Naive thymus-derived CD4-positive, alpha-beta T cell (primary cell): ENCODE measurements at regions of chr19 and their contacts with region 1.

Region 1: DNA sequence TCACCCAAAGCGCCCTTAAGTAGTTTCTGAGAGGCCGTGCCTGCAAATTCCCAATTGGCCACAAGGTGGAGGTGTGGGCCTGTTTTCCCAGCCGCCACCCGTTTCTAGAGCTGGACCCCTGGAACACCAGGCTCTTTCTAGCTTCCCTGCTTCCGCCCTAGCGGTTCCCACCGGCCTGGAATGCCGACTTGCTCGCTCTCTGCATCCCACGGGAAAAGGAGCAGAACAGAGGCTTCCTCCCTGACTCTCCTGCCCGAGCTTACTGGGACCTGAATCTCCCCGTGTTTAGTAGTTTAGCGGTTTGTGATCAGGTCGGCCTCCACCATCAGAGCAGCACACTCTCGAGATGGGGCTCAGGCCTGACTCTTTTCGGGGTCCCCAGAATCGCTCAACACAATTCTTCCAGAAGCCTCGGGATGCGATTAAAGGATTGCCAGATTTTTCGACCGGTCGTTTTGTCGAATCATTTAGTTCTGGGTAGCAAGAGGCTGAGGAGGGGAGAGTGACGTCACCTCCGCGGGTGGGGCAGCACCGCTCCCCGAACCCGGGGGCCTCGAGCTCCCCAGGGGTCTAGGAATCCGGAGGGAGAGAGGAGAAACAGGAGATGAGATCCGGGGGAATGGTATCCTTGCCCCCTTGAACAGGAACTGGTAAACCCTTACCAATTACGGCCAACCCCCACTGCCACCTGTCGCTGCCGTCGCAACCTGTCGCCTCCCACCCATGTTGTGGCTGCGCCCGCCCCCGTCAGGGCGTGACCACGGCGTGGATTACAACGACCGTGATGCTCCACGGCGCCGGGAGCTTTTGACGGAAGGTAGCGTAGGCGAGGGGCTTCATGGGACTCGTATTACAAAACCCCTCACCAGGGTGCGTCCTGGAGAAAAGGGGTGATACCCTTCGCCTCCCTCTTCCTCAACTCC is 8.0 kb downstream of the NAPSA start:
- DNase-seq: peak; percentile 71 to 91 (median 85)
- ATAC-seq: peak; percentile 89
- H3K4me3 ChIP-seq: peak overlapping the region; percentile 78
- H3K4me3 Mint-ChIP-seq: peak overlapping the region; percentile 88 to 95 (median 92)
- H3K27ac ChIP-seq: peak overlapping the region; percentile 90
- H3K27ac Mint-ChIP-seq: peak overlapping the region; percentile 83 to 99 (median 96)
- H3K4me1 ChIP-seq: peaks cover 0 to 16% of the 10 kb centered on the region in 2 donors
- H3K4me1 Mint-ChIP-seq: peaks cover 15 to 48% (median 42%) of the 10 kb centered on the region in 7 donors
- H3K27me3 ChIP-seq: no peaks in the 10 kb centered on the region
- H3K27me3 Mint-ChIP-seq: no peaks in the 10 kb centered on the region

Region 2: GRCh38 chr19:50368649-50369570 is 11.5 kb after region 1 on chr19:
- CTCF ChIA-PET with region 1: interaction called, 11 read pairs
- POLR2A ChIA-PET with region 1: interaction called, 12 read pairs
- intact Hi-C with region 1: loop called (anchors 1 kb)
- DNase-seq: peak; percentile 56 to 83 (median 74)
- ATAC-seq: peak; percentile 91
- H3K4me3 ChIP-seq: peak overlapping the region; percentile 69
- H3K4me3 Mint-ChIP-seq: peak overlapping the region; percentile 68 to 97 (median 93)
- H3K27ac ChIP-seq: peak overlapping the region; percentile 78
- H3K27ac Mint-ChIP-seq: peak overlapping the region; percentile 60 to 97 (median 91)
- H3K4me1 ChIP-seq: peaks cover under 1 to 4% of the 10 kb centered on the region in 2 donors
- H3K4me1 Mint-ChIP-seq: peaks cover 8 to 45% (median 36%) of the 10 kb centered on the region in 7 donors
- H3K27me3 ChIP-seq: no peaks in the 10 kb centered on the region
- H3K27me3 Mint-ChIP-seq: no peaks in the 10 kb centered on the region

Region 3: GRCh38 chr19:50383852-50384684 is 26.6 kb after region 1 on chr19 and contains the start of gene POLD1:
- CTCF ChIA-PET with region 1: no interaction called
- POLR2A ChIA-PET with region 1: interaction called, 11 read pairs
- intact Hi-C with region 1: loop called (anchors 1 kb)
- DNase-seq: peak; percentile 98 to 100 (median 99)
- ATAC-seq: peak; percentile 96
- H3K4me3 ChIP-seq: peak within 1 kb of the TSS; percentile 74
- H3K4me3 Mint-ChIP-seq: peak within 1 kb of the TSS; percentile 91 to 99 (median 94)
- H3K27ac ChIP-seq: peak within 1 kb of the TSS; percentile 75
- H3K27ac Mint-ChIP-seq: peak within 1 kb of the TSS; percentile 80 to 97 (median 94)
- H3K4me1 ChIP-seq: peaks cover 3 to 7% of the 10 kb centered on the region in 2 donors
- H3K4me1 Mint-ChIP-seq: peaks cover 16 to 51% (median 35%) of the 10 kb centered on the region in 7 donors
- H3K27me3 ChIP-seq: no peaks in the 10 kb centered on the region
- H3K27me3 Mint-ChIP-seq: no peaks in the 10 kb centered on the region
- total RNA-seq, gene POLD1: 26.0 to 110 (median 40.8) TPM

Region 4: DNA sequence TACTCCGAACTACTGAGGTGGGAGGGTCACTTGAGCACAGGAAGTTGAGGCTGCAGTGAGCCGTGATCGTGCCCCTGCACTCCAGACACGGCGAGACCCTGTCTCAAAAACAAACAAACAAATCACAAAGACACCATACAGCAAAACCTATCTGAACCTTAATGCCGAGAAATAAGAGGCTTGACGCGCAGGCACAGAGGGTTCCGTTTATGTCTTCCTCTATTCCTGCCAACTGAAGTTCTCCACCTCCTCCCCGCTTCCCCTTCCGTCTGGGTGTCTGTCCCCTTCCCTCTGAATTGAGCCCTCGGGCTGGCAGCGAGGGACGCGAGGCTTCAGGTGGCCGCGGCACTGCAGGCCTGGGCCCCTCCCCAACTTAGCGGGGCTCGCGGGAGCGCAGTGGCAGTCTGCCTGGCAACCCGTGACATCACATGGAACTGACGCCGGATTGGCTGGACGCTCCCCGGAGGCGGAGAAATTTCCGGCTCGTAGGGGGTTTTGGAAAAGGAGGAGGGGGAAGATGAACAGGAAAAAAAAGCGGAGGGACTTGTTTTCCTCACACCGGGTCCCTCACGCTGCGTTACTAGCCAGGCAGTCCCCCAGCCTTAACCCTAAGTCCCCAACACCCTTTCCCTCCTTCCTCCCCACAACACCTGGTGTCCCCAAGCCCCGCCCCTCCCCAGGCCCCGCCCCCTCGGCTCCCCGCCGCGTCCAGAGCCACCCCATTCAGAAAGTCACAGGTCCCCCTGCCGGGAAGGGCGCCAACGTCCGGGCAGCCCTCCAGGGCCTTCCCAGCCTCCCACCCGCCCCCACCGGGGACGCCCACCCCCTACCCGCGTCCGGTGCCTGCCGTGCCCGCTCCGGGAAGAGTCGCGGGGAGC is 74.1 kb after region 1 on chr19:
- CTCF ChIA-PET with region 1: interaction called, 3 read pairs
- POLR2A ChIA-PET with region 1: no interaction called
- intact Hi-C with region 1: loop called in 1 of 2 experiments (anchors 1 kb)
- DNase-seq: peak; percentile 80 to 95 (median 89)
- ATAC-seq: peak; percentile 93
- H3K4me3 ChIP-seq: peak overlapping the region; percentile 61
- H3K4me3 Mint-ChIP-seq: peak overlapping the region; percentile 87 to 100 (median 92)
- H3K27ac ChIP-seq: peak overlapping the region; percentile 73
- H3K27ac Mint-ChIP-seq: peak overlapping the region; percentile 61 to 94 (median 90)
- H3K4me1 ChIP-seq: peaks cover 0 to 12% of the 10 kb centered on the region in 2 donors
- H3K4me1 Mint-ChIP-seq: peaks cover 0 to 23% (median 16%) of the 10 kb centered on the region in 7 donors
- H3K27me3 ChIP-seq: no peaks in the 10 kb centered on the region
- H3K27me3 Mint-ChIP-seq: peaks cover 0 to 19% (median 12%) of the 10 kb centered on the region in 5 donors

Region 5: DNA sequence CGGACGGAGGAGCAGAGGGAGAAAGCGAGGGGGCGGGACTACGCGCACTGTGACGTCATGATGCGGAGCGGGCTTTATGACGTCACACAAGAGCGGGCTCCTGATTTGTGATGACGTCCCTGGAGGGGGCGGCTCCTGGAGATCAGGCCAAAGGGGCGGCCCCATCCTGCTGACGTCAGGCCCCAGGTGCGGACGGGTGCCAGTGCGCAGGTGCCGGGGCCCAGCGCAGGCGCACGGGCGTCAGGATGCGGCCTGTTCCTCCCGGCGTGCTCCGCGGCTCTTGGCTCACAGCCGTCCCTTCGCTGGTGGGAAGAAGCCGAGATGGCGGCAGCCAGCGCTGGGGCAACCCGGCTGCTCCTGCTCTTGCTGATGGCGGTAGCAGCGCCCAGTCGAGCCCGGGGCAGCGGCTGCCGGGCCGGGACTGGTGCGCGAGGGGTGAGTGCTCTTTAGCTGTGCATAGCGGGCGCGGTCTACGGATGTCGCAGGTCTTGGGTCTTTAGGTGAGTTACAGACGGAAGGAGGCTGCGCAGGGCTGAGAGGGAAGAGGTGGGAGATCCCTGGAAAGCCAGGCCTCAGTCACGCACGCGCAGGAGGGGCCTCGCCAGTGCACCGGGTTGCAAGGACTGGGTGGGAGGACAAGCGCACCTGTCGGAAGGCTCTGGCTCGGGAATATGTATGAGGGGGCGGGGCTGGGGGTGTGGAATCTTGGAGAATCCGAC is 118.9 kb after region 1 on chr19 and contains the starts of genes EMC10 and GARIN5A:
- CTCF ChIA-PET with region 1: interaction called, 3 read pairs
- POLR2A ChIA-PET with region 1: interaction called, 3 read pairs
- intact Hi-C with region 1: loop called (anchors 1 kb)
- DNase-seq: peak; percentile 92 to 96 (median 95)
- ATAC-seq: peak; percentile 97
- H3K4me3 ChIP-seq: peak within 1 kb of the TSS; percentile 96
- H3K4me3 Mint-ChIP-seq: peak within 1 kb of the TSS; percentile 94 to 99 (median 98)
- H3K27ac ChIP-seq: peak within 1 kb of the TSS; percentile 96
- H3K27ac Mint-ChIP-seq: peak within 1 kb of the TSS; percentile 88 to 98 (median 96)
- H3K4me1 ChIP-seq: peaks cover 14 to 19% of the 10 kb centered on the region in 2 donors
- H3K4me1 Mint-ChIP-seq: peaks cover 21 to 36% (median 27%) of the 10 kb centered on the region in 7 donors
- H3K27me3 ChIP-seq: no peaks in the 10 kb centered on the region
- H3K27me3 Mint-ChIP-seq: no peaks in the 10 kb centered on the region
- total RNA-seq, gene EMC10: 75.5 to 95.2 (median 88.1) TPM
- total RNA-seq, gene GARIN5A: 0.59 to 0.93 (median 0.68) TPM in 4 of 5 experiments, not detected in the other

Region 6: GRCh38 chr19:50556282-50557008 is 199.0 kb after region 1 on chr19:
- CTCF ChIA-PET with region 1: interaction called, 12 read pairs
- POLR2A ChIA-PET with region 1: no interaction called
- intact Hi-C with region 1: loop called (anchors 1 kb)
- DNase-seq: peak; percentile 34 to 84 (median 69)
- ATAC-seq: peak; percentile 77
- H3K4me3 ChIP-seq: peak overlapping the region; percentile 56
- H3K4me3 Mint-ChIP-seq: peak overlapping the region; percentile 80 to 98 (median 91)
- H3K27ac ChIP-seq: no peak overlapping the region
- H3K27ac Mint-ChIP-seq: peak overlapping the region in 1 of 9 donors; percentile 78
- H3K4me1 ChIP-seq: no peaks in the 10 kb centered on the region
- H3K4me1 Mint-ChIP-seq: peaks cover 8 to 20% (median 10%) of the 10 kb centered on the region in 7 donors
- H3K27me3 ChIP-seq: peaks cover 0 to 4% of the 10 kb centered on the region in 2 donors
- H3K27me3 Mint-ChIP-seq: peaks cover 48 to 69% (median 51%) of the 10 kb centered on the region in 5 donors

Region 7: DNA sequence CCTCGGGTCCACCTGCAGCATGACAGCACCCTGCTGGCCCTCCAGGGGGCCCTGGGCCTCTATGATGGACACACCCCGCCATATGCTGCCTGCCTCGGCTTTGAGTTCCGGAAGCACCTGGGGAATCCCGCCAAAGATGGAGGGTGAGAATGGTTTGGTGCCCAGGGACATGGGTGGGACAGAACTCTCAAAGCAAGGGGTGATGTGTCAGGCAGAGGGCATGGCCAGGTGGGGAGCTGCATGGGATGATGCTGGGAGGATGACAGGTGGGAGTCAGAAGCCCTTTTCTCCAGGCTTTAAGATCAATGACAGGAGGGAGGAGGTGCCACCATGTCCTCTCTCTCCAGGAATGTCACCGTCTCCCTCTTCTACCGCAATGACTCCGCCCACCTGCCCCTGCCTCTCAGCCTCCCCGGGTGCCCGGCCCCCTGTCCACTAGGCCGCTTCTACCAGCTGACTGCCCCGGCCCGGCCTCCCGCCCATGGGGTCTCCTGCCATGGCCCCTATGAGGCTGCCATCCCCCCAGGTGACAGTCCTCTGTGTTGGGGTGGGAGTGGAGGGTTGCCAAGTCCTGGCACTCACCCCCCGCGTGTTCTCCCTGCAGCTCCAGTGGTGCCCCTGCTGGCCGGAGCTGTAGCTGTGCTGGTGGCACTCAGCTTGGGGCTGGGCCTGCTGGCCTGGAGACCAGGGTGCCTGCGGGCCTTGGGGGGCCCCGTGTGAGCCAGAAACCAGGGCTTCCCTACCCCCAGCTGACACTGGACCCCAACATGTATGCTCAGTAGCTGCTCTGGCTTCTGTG is 437.2 kb after region 1 on chr19:
- CTCF ChIA-PET with region 1: no interaction called
- POLR2A ChIA-PET with region 1: no interaction called
- intact Hi-C with region 1: no loop called
- DNase-seq: no peak
- ATAC-seq: peak; percentile 17
- H3K4me3 ChIP-seq: no peak overlapping the region
- H3K4me3 Mint-ChIP-seq: no peak overlapping the region
- H3K27ac ChIP-seq: no peak overlapping the region
- H3K27ac Mint-ChIP-seq: peak overlapping the region in 5 of 9 donors; percentile 27 to 81 (median 42)
- H3K4me1 ChIP-seq: no peaks in the 10 kb centered on the region
- H3K4me1 Mint-ChIP-seq: peaks cover 0 to 12% (median 0%) of the 10 kb centered on the region in 7 donors
- H3K27me3 ChIP-seq: no peaks in the 10 kb centered on the region
- H3K27me3 Mint-ChIP-seq: no peaks in the 10 kb centered on the region